K562 (cell line): ENCODE measurements at regions of chr20 and their contacts with region 1.

Region 1: DNA sequence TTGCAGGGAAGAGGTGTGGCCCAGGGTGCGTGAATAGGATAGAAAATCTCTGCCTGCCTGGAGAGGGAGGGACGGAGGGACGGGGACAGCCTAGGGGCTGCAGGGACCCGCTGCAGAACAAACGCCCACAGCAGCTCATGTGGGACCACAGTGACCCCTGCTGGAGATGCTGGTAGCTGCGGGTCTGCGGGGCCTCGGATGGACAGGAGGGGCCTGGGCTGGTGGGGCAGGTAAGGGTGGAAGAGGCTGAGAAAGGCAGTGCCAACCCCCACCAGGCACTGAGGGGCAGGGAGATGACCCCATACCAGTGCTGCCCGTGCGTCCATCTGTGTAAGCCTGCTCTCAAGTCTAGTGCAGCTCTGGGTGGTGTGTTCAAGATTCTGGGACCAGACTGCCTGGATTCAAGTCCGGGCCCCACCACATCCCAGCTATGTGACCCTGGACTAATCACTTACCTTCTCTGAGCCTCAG is 39.4 kb downstream of the KIAA1755 start:
- DNase-seq: peak; percentile 83 to 89 (median 88)
- ATAC-seq: peak; percentile 93
- H3K4me3 ChIP-seq: no peak overlapping the region
- H3K27ac ChIP-seq: no peak overlapping the region
- H3K4me1 ChIP-seq: peaks cover 0 to 17% of the 10 kb centered on the region in 2 experiments; a peak in 2 of 5 replicates
- H3K27me3 ChIP-seq: peaks cover 7 to 37% of the 10 kb centered on the region in 2 experiments; a peak in 3 of 5 replicates
- CTCF ChIP-seq: peak; percentile 88 to 96 (median 94)
- EP300 ChIP-seq: no peak
- POLR2A ChIP-seq: no peak
- RAD21 ChIP-seq: peak; percentile 85 to 97

Region 2: DNA sequence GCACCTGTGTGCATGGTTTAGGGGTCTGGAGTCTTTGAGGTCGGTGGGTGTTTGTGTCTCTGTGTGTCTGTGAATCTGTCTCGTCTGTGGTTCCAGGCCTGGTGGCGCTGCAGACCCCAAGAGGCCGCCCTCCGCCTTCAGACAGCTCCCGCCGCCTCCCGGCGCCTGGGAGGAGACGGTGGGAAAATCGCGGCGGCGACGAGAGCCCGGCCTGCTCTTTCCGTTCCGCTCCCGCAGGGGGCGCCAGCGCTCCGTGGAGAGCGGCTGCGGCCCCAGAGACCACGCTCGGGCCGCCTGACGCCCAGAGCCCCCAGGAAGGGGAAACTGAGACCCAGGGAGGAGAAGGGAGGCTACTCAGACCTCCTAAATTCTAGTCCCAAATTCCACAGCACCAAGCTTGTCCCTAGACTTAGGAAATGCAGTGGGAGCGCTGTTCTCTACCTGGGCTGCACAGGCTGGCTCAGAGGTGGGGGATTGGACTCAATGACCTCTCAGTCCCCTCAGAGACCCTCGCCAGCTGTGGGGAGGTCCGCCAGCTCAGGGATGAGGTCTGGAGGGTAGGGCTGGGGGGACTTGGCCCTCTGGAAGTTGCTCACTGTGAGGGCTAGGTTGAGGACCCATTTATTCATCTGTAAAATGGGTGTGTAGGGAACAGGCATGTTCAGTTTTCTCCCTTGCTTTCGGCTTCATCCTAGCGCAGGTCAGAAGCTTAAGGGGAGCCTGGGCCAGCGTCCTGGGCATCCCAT is 656.6 kb before region 1 on chr20:
- CTCF ChIA-PET with region 1: interaction called, 8 read pairs
- POLR2A ChIA-PET with region 1: no interaction called
- in situ Hi-C with region 1: no loop called
- intact Hi-C with region 1: loop called (anchors 5 kb)
- DNase-seq: peak; percentile 62 to 82 (median 78)
- ATAC-seq: peak; percentile 88
- H3K4me3 ChIP-seq: no peak overlapping the region
- H3K27ac ChIP-seq: no peak overlapping the region
- H3K4me1 ChIP-seq: peaks cover 10 to 16% of the 10 kb centered on the region in 2 experiments; a peak in 4 of 5 replicates
- H3K27me3 ChIP-seq: peaks cover 5 to 30% of the 10 kb centered on the region in 2 experiments; a peak in 3 of 5 replicates
- CTCF ChIP-seq: peak; percentile 88 to 94 (median 89)
- EP300 ChIP-seq: no peak
- POLR2A ChIP-seq: no peak
- RAD21 ChIP-seq: peak; percentile 92

Region 3: DNA sequence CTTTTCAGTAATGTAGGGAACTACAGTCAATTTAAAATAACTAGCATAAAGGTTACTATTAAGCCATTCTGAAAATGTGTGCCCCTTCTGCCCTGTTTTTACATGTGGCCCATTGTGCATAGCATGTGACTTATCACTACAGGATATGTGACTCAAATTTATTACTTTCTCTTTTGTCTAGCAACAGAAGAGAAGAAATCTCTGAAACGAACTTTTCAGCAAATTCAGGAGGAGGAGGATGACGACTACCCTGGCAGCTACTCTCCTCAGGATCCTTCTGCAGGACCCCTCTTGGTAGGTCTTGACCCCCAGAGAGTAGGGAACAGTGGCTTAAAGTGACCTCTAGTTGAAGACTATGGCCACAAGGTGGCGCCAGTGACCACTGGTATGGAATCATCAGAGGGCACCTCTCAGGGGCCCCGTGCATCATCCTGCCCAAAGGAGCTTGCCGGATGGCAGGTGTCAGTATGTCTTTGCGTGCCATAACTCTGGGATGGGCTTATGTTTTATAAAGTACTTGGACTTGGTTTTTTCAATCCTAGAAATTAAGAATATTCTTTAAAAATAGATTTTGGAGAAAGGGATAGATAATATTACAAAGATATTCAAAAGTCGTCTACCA is 163.7 kb before region 1 on chr20:
- CTCF ChIA-PET with region 1: interaction called, 53 read pairs
- POLR2A ChIA-PET with region 1: interaction called, 5 read pairs
- in situ Hi-C with region 1: no loop called
- intact Hi-C with region 1: loop called (anchors 1 kb)
- DNase-seq: peak; percentile 78 to 88 (median 80)
- ATAC-seq: peak; percentile 99
- H3K4me3 ChIP-seq: no peak overlapping the region
- H3K27ac ChIP-seq: no peak overlapping the region
- H3K4me1 ChIP-seq: no peaks in the 10 kb centered on the region
- H3K27me3 ChIP-seq: no peaks in the 10 kb centered on the region
- CTCF ChIP-seq: peak; percentile 76 to 90 (median 83)
- EP300 ChIP-seq: no peak
- POLR2A ChIP-seq: no peak
- RAD21 ChIP-seq: peak; percentile 82 to 90

Region 4: GRCh38 chr20:38113401-38114325 is 107.5 kb before region 1 on chr20:
- CTCF ChIA-PET with region 1: no interaction called
- POLR2A ChIA-PET with region 1: no interaction called
- in situ Hi-C with region 1: no loop called
- intact Hi-C with region 1: loop called (anchors 1 kb)
- DNase-seq: peak; percentile 80 to 96 (median 84)
- ATAC-seq: peak; percentile 96
- H3K4me3 ChIP-seq: no peak overlapping the region
- H3K27ac ChIP-seq: peak overlapping the region; percentile 59
- H3K4me1 ChIP-seq: peaks cover 15 to 36% of the 10 kb centered on the region in 2 experiments
- H3K27me3 ChIP-seq: no peaks in the 10 kb centered on the region
- CTCF ChIP-seq: peak; percentile 86 to 90 (median 88)
- EP300 ChIP-seq: peak; percentile 75
- POLR2A ChIP-seq: 0 out of 2 replicates have a peak, but pooled peaks have one; percentile 27
- RAD21 ChIP-seq: peak; percentile 89 to 95

Region 5: GRCh38 chr20:38173237-38174156 is 47.7 kb before region 1 on chr20:
- CTCF ChIA-PET with region 1: interaction called, 4 read pairs
- POLR2A ChIA-PET with region 1: no interaction called
- in situ Hi-C with region 1: no loop called
- intact Hi-C with region 1: loop called (anchors 2 kb)
- DNase-seq: peak; percentile 31 to 68 (median 52)
- ATAC-seq: peak; percentile 71
- H3K4me3 ChIP-seq: no peak overlapping the region
- H3K27ac ChIP-seq: no peak overlapping the region
- H3K4me1 ChIP-seq: peaks cover 9 to 12% of the 10 kb centered on the region in 2 experiments; a peak in 2 of 5 replicates
- H3K27me3 ChIP-seq: peaks cover 15 to 16% of the 10 kb centered on the region in 2 experiments; a peak in 4 of 5 replicates
- CTCF ChIP-seq: no peak
- EP300 ChIP-seq: no peak
- POLR2A ChIP-seq: no peak
- RAD21 ChIP-seq: no peak

Region 6: DNA sequence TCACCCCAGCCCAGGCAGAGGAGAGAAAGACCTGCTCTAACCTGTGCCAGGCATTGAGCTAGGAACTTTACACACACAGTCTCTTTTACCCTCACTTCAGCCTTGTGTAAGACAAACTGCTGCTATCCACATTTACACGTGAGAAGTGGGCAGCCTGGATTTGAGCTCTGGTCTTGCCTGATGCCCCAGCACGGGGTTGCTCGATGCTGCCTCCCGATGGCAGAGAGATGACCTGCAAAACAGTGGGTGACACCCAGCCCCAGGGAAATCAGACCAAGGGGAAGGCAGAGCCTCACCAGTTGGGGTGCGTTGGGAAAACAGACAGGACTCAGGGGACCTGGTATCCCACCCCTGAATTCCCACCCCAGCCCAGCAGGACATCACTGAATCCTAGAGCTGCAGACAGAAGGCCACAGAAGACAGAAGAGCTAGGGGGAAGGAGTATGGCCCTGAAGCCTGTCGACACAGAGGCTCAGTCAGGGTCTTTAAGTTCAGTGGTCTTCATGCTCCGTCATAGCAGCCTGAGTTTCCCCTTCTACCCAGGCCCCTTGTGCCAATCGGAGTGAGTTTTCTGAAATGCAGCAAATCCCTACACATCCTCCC is 83.8 kb after region 1 on chr20:
- CTCF ChIA-PET with region 1: no interaction called
- POLR2A ChIA-PET with region 1: no interaction called
- in situ Hi-C with region 1: no loop called
- intact Hi-C with region 1: no loop called
- DNase-seq: peak; percentile 47 to 54 (median 50)
- ATAC-seq: peak; percentile 90
- H3K4me3 ChIP-seq: no peak overlapping the region
- H3K27ac ChIP-seq: no peak overlapping the region
- H3K4me1 ChIP-seq: peaks cover 0 to 6% of the 10 kb centered on the region in 2 experiments; a peak in 1 of 5 replicates
- H3K27me3 ChIP-seq: peaks cover 14 to 34% of the 10 kb centered on the region in 2 experiments; a peak in 4 of 5 replicates
- CTCF ChIP-seq: peak; percentile 68 to 74 (median 71)
- EP300 ChIP-seq: no peak
- POLR2A ChIP-seq: no peak
- RAD21 ChIP-seq: peak; percentile 14 to 41; a peak in 2 of 4 replicates